Adrenal gland (tissue), 19 donors: ENCODE measurements at regions of chr11 and their contacts with region 1.

Region 1: GRCh38 chr11:120652705-120653335 is 141.3 kb downstream of the GRIK4 start:
- DNase-seq: no peak
- H3K4me3 ChIP-seq: no peak overlapping the region
- H3K27ac ChIP-seq: no peak overlapping the region
- H3K4me1 ChIP-seq: no peaks in the 10 kb centered on the region
- H3K27me3 ChIP-seq: no peaks in the 10 kb centered on the region
- CTCF ChIP-seq: no peak
- POLR2A ChIP-seq: no peak

Region 2: GRCh38 chr11:120239713-120240640 is 412.8 kb before region 1 on chr11 and contains the start of gene POU2F3:
- intact Hi-C with region 1: no loop called
- DNase-seq: no peak
- H3K4me3 ChIP-seq: no peak within 1 kb of the TSS
- H3K27ac ChIP-seq: no peak within 1 kb of the TSS
- H3K4me1 ChIP-seq: peaks cover 0 to 4% of the 10 kb centered on the region in 2 donors
- H3K27me3 ChIP-seq: peaks cover 34% of the 10 kb centered on the region
- CTCF ChIP-seq: no peak
- POLR2A ChIP-seq: no peak
- total RNA-seq, gene POU2F3: 0.11 to 1.4 (median 0.29) TPM in 6 of 9 donors, not detected in the others

Region 3: DNA sequence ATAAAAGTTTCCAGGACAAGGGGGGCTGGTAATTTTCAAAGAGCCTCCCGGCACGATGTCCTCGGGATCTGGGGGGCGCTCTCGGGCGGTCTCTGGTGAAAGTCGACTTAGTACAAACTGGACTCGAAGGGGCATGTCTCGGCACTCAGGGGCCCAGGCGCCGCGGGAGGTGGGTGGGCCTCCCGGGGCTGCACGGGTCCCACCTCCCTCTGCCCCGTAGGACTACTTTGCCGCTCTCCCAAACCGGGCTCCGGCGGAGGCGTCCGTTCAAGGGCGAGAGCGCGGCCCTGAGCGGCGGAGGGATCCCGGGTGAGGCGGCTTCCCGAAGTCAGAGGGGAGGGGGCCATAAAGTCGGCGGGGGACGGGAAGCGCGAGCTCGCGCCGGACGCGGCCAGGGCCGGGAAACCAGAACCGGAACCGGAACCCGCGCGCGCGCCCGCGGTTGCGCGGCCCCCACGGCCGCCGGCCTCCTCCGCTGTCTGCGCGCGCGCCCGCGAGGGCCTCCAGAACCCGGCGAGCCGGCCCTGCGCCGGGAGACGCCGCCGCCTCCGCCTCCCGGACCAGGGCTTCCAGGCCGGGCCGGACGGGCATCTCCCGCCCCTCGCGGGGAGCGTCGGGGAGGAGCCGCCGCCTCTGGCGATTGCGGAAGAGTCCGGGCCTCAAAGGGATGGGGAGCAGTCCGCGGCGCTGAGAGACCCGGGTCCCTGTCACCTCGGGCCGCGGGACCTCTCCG is 316.7 kb before region 1 on chr11 and contains the start of gene ARHGEF12:
- intact Hi-C with region 1: no loop called
- DNase-seq: peak; percentile 96 to 97 (median 96)
- H3K4me3 ChIP-seq: peak within 1 kb of the TSS; percentile 71 to 97 (median 82)
- H3K27ac ChIP-seq: peak within 1 kb of the TSS; percentile 95 to 99 (median 98)
- H3K4me1 ChIP-seq: peaks cover 35 to 74% of the 10 kb centered on the region in 2 donors
- H3K27me3 ChIP-seq: no peaks in the 10 kb centered on the region
- CTCF ChIP-seq: peak in 1 of 6 experiments; percentile 36
- POLR2A ChIP-seq: peak; percentile 88 to 89
- total RNA-seq, gene ARHGEF12: 74.9 to 125 (median 105) TPM

Region 4: DNA sequence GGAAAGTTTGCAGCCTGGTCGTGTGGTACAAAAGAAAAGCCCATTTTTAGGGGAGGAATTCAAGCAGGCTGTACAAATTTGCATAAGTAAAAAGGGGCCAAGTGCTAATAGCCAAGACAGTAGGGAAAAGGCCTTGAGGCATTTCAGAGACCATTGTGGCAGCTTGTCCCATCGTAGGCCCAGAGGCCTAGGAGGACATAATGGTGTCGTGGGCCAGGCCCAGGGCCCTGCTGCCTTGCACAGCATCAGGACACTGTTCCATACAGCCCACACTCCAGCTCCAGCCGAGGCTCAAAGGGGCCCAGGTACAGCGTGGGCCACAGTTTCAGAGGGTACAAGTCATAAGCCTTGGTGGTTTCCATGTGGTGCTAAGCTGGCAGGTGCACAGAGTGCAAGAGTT is 34.4 kb before region 1 on chr11:
- intact Hi-C with region 1: loop called in 1 of 2 experiments (anchors 2 kb)
- DNase-seq: no peak
- H3K4me3 ChIP-seq: no peak overlapping the region
- H3K27ac ChIP-seq: no peak overlapping the region
- H3K4me1 ChIP-seq: peaks cover 0 to 2% of the 10 kb centered on the region in 2 donors
- H3K27me3 ChIP-seq: no peaks in the 10 kb centered on the region
- CTCF ChIP-seq: no peak
- POLR2A ChIP-seq: no peak